Dendritic cell treated with granulocyte-macrophage colony-stimulating factor and Interleukin-4, amounts not matched to agents 40 ng/mL and 50 ng/mL, for 4 days (primary cell): ENCODE measurements at regions of chr2 and their contacts with region 1.

Region 1: GRCh38 chr2:74482801-74483674 is at the starts of genes CCDC142 and TTC31:
- H3K4me3 Mint-ChIP-seq: peak within 1 kb of the TSS; percentile 97
- H3K27ac Mint-ChIP-seq: peak within 1 kb of the TSS; percentile 89
- H3K4me1 Mint-ChIP-seq: peaks cover 50% of the 10 kb centered on the region
- H3K27me3 Mint-ChIP-seq: no peaks in the 10 kb centered on the region

Region 2: DNA sequence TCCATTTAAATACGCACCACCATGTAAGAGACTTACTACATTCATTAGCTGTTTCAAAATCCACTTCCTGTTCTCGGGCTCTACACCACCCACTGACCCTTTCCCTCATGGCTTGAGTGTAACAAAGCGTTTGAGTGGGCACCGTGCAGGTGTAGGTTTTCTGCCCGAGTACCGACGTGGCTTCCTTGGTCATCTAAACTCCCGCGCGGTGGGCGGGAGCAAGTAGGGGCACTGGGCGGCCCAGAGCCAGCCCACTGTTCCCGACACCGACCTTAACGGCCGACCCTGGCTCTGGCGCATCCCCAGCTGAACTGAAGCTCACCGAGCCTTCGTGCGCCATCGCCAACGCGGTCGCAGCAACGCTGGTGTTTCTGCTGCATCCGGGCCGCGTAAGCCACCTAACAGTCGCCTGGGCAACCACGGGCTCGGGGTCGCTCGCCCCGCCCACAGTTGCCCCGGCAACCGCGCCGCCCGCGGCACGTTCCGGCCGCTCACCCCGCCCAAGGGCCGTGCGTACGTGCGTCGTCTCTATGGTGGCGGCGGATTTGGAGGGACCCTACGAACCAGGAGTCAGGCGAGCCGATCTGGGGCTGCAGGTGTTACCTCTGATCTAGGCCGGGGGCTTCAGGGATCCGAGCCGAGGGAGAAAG is 61.7 kb before region 1 on chr2 and contains the starts of genes C2orf81 and WDR54:
- intact Hi-C with region 1: loop called (anchors 1 kb)
- H3K4me3 Mint-ChIP-seq: peak within 1 kb of the TSS; percentile 99
- H3K27ac Mint-ChIP-seq: peak within 1 kb of the TSS; percentile 71
- H3K4me1 Mint-ChIP-seq: peaks cover 41% of the 10 kb centered on the region
- H3K27me3 Mint-ChIP-seq: peaks cover 11% of the 10 kb centered on the region

Region 3: DNA sequence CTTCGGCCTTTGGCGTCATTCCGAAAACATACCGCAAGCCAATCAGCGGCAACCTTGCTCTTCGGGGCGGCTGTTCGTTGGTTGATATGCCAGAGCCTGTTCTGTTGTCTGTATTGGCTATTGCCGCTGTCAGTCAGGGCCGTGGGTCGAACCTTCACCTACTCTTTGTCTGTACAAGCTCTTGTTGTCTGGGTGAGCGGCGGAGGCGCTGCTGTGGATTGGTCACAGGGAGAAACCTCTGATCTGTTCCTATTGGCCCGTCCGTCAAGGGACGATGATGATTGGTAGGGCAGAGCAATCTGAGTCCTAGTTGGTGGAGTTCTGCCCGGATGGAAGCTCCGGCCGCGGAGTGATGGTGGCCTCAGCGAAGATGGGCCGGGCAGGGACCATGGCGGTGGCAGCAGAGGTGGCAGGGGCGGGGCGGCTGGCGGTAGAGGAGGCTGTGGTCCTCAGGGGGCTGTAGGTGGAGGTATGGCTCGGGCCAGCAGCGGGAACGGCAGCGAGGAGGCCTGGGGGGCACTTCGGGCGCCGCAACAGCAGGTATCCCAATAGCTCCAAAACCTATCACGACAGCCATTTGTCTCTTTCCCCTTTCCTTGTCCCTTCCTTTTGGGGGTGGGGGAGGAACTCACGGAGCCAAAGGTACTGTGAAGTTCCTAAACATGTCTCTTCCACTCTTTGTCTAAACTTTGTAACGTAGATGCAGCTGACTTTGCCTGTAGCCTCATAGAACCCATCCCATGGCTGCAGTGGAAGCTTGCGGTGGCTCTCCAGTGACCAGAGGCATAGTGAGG is 24.7 kb before region 1 on chr2 and contains the start of gene WBP1:
- intact Hi-C with region 1: loop called (anchors 1 kb)
- H3K4me3 Mint-ChIP-seq: peak within 1 kb of the TSS; percentile 85
- H3K27ac Mint-ChIP-seq: peak within 1 kb of the TSS; percentile 94
- H3K4me1 Mint-ChIP-seq: peaks cover 60% of the 10 kb centered on the region
- H3K27me3 Mint-ChIP-seq: no peaks in the 10 kb centered on the region

Region 4: DNA sequence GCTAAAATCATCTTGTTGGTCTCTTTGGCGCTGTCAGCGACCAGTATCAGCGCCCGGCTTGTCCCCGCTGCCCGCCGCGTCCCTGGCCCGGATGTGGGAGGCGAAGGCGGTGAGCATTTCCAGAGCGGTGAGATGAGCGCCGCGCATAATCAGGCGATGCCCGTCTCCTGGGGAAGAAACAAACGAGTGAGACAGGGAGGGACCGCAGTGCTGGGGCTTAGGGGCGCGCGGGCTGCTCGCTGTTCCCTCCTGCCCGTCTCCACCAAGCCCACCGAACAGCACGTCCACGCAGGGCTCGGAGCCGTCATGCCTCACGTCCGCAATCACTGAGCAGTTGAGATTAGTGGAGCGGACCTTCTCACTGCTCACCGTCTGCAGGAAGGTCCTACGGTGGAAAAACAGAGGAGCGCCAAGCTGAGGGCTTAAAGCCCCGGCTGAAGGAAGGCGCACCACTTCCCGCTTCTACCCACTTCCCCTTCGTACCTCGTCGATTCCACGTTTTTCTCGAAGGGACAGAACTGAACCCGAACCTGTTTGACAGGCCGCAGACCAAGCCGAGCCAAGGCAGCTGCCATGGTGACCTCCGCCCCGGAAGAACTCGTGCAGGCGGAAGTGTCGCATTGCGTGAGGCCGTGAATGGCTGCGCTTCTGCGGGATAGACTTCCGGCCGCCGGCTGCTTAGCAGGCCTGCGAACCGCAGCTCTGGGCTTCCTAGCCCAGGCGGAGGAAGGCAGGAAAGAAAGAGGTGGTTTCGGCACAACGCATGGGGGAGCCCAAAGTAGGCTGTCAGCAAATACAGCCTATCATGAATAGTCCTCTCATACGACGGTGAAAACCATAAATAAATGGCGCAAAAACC is 10.7 kb before region 1 on chr2 and contains the start of gene MRPL53:
- intact Hi-C with region 1: loop called (anchors 1 kb)
- H3K4me3 Mint-ChIP-seq: peak within 1 kb of the TSS; percentile 96
- H3K27ac Mint-ChIP-seq: peak within 1 kb of the TSS; percentile 97
- H3K4me1 Mint-ChIP-seq: peaks cover 37% of the 10 kb centered on the region
- H3K27me3 Mint-ChIP-seq: no peaks in the 10 kb centered on the region

Region 5: GRCh38 chr2:74529357-74530238 is 46.6 kb after region 1 on chr2 and contains the starts of genes AUP1 and HTRA2:
- intact Hi-C with region 1: loop called (anchors 1 kb)
- H3K4me3 Mint-ChIP-seq: peak within 1 kb of the TSS; percentile 99
- H3K27ac Mint-ChIP-seq: peak within 1 kb of the TSS; percentile 97
- H3K4me1 Mint-ChIP-seq: peaks cover 48% of the 10 kb centered on the region
- H3K27me3 Mint-ChIP-seq: no peaks in the 10 kb centered on the region

Region 6: DNA sequence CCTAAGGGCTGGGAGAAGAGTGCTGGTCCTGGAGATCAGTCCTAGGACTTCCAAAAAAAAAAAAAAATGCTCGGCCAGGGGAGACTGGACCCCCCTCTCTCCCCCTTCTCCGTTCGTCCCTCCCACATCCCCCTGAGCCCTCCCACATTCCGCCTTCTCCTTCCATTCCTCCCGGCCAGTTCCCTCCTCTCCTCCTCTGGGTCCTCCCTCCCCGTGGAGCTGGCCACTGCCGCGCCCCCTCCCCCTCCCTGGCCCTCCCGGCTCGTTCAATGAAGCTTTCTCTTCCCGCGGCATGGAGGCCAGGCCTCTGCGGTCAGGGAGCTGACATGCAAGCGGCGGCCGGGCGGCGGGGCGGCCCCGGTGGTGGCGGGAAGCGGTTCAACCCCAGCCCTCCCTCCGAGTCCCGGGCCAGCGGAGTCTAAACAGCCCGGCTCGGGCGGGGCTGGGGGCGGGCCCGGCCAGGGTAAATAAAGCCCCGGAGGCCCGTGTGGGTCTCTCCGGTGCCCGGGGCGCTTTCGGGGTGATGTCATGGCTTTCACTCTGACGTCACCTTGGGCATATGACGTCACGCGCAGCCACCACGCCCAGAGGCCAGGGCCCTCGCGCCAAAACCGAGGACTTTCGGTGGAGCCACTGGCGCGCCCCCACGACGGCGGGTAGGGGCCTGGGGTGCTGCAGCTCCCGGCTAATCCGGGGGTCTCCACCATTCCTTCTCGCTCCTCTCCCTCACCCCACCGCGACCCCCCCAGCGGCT is 71.0 kb after region 1 on chr2 and contains the start of gene LOXL3:
- intact Hi-C with region 1: loop called (anchors 2 kb)
- H3K4me3 Mint-ChIP-seq: peak within 1 kb of the TSS; percentile 97
- H3K27ac Mint-ChIP-seq: peak within 1 kb of the TSS; percentile 95
- H3K4me1 Mint-ChIP-seq: peaks cover 65% of the 10 kb centered on the region
- H3K27me3 Mint-ChIP-seq: no peaks in the 10 kb centered on the region

Region 7: GRCh38 chr2:74587664-74588277 is 104.7 kb after region 1 on chr2:
- intact Hi-C with region 1: loop called (anchors 1 kb)
- H3K4me3 Mint-ChIP-seq: no peak overlapping the region
- H3K27ac Mint-ChIP-seq: no peak overlapping the region
- H3K4me1 Mint-ChIP-seq: peaks cover 44% of the 10 kb centered on the region
- H3K27me3 Mint-ChIP-seq: peaks cover 2% of the 10 kb centered on the region

Region 8: DNA sequence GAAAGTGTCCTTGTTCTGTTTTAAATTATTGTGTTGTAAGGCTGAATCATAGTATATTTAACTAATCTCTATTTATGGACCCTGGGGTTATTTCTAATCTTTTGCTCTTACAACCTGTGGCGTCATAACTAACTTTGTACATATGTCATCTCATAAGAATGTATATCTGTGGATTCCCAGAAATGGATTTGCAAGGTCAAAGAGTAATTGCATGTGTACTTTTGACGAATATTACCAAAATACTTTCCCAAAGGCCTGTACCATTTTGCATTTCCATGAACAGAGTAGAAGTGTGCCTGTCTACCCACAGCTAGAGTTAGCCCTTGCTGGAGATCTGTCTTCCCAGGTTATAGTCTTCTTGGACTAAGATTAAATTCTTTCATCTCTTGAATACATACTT is 213.8 kb after region 1 on chr2:
- intact Hi-C with region 1: no loop called
- H3K4me3 Mint-ChIP-seq: no peak overlapping the region
- H3K27ac Mint-ChIP-seq: no peak overlapping the region
- H3K4me1 Mint-ChIP-seq: peaks cover 26% of the 10 kb centered on the region
- H3K27me3 Mint-ChIP-seq: peaks cover 12% of the 10 kb centered on the region